ENCODE measurements at regions of chr5 and their contacts with region 1.

Region 1: GRCh38 chr5:150507283-150508020 is 479 bp upstream of the NDST1 start:
- DNase-seq: peak; percentile 79
- H3K4me3 ChIP-seq: no peak overlapping the region
- H3K27ac ChIP-seq: peak overlapping the region; percentile 70 to 92 (median 82)
- H3K4me1 ChIP-seq: peaks cover 71 to 93% (median 83%) of the 10 kb centered on the region in 4 donors
- H3K27me3 ChIP-seq: no peaks in the 10 kb centered on the region
- CTCF ChIP-seq: no peak
- EP300 ChIP-seq: no peak
- POLR2A ChIP-seq: no peak

Region 2: DNA sequence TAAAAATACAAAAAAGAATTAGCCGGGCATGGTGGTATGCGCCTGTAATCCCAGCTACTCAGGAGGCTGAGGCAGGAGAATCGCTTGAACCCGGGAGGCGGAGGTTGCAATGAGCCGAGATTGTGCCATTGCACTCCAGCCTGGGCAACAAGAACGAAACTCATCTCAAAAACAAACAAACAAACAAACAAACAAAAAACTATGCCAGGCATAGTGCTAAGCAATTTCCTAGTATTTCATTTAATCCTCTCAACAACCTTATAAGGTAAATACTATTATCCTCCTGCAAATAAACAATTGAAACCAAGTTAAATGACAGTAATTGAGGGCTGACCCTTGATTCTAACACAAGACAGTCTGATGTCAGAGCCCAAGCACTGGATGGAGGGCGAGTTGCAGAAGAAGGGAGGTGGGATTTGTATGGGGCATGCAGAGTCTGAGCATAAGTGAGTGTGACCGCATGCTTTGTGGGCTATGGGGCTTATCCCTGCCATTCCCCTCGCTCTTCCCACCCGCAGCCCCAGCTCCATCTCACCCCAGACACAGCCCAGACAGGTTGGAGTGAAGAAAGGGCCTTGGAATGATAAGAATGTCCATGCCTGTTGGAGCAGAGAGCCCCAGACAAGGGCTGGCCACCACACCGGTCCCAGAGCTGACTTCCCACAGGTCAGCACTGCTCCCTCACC is 33.6 kb before region 1 on chr5:
- in situ Hi-C with region 1: no loop called
- intact Hi-C with region 1: loop called (anchors 1 kb)
- DNase-seq: no peak
- H3K4me3 ChIP-seq: no peak overlapping the region
- H3K27ac ChIP-seq: no peak overlapping the region
- H3K4me1 ChIP-seq: peaks cover 3 to 4% (median 3%) of the 10 kb centered on the region in 4 donors
- H3K27me3 ChIP-seq: no peaks in the 10 kb centered on the region
- CTCF ChIP-seq: no peak
- EP300 ChIP-seq: no peak
- POLR2A ChIP-seq: no peak

Measured in transverse colon (tissue), 4 donors.